ENCODE measurements at regions of chr5 and their contacts with region 1.

Region 1: DNA sequence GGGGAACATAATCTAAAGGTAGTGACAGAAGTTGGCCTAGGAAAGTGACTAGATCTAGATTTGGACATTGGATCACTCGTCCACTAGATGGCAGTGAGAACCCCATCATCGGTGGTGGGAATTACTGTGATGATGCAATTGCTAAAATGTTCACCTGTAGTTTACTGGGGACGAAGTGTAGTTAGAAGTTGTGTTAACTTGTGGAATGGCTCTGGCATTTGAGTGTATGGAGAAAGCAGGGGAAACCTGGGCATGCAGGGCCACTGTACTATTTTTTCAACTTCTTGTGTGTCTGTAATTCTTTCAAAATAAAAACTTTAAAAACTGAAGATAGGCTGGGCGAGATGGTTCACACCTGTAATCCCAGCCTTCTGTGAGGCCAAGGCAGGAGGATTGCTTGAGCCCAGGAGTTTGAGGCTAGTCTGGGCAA is 75.5 kb downstream of the PHAX start:
- DNase-seq: no peak

Region 2: GRCh38 chr5:126776497-126777256 is 100.5 kb after region 1 on chr5 and contains the start of gene LMNB1:
- intact Hi-C with region 1: loop called (anchors 1 kb)
- DNase-seq: peak; percentile 98
- total RNA-seq, gene LMNB1: 3.0 TPM

Measured in cardiac septum (tissue), 1 donor.